ENCODE measurements at regions of chr10 and their contacts with region 1.

Region 1: GRCh38 chr10:819326-819725 is 112.2 kb downstream of the LARP4B start:
- DNase-seq: no peak
- H3K4me3 ChIP-seq: no peak overlapping the region
- H3K27ac ChIP-seq: no peak overlapping the region
- H3K4me1 ChIP-seq: peaks cover 3% of the 10 kb centered on the region
- H3K27me3 ChIP-seq: no peaks in the 10 kb centered on the region
- CTCF ChIP-seq: no peak

Region 2: GRCh38 chr10:851901-852300 is 32.6 kb after region 1 on chr10:
- CTCF ChIA-PET with region 1: no interaction called
- dilution Hi-C with region 1: loop called (anchors 5 kb)
- in situ Hi-C with region 1: no loop called
- intact Hi-C with region 1: no loop called
- DNase-seq: no peak
- H3K4me3 ChIP-seq: no peak overlapping the region
- H3K27ac ChIP-seq: no peak overlapping the region
- H3K4me1 ChIP-seq: no peaks in the 10 kb centered on the region
- H3K27me3 ChIP-seq: no peaks in the 10 kb centered on the region
- CTCF ChIP-seq: no peak

Region 3: GRCh38 chr10:955820-956217 is 136.5 kb after region 1 on chr10:
- CTCF ChIA-PET with region 1: no interaction called
- dilution Hi-C with region 1: no loop called
- in situ Hi-C with region 1: no loop called
- intact Hi-C with region 1: no loop called
- DNase-seq: no peak
- H3K4me3 ChIP-seq: no peak overlapping the region
- H3K27ac ChIP-seq: no peak overlapping the region
- H3K4me1 ChIP-seq: no peaks in the 10 kb centered on the region
- H3K27me3 ChIP-seq: peaks cover 2% of the 10 kb centered on the region
- CTCF ChIP-seq: no peak

Region 4: GRCh38 chr10:1358943-1359598 is 539.7 kb after region 1 on chr10:
- CTCF ChIA-PET with region 1: no interaction called
- dilution Hi-C with region 1: no loop called
- in situ Hi-C with region 1: no loop called
- intact Hi-C with region 1: no loop called
- DNase-seq: no peak
- H3K4me3 ChIP-seq: no peak overlapping the region
- H3K27ac ChIP-seq: no peak overlapping the region
- H3K4me1 ChIP-seq: no peaks in the 10 kb centered on the region
- H3K27me3 ChIP-seq: no peaks in the 10 kb centered on the region
- CTCF ChIP-seq: no peak

Region 5: GRCh38 chr10:2401459-2401858 is 1582.1 kb after region 1 on chr10:
- CTCF ChIA-PET with region 1: no interaction called
- dilution Hi-C with region 1: no loop called
- in situ Hi-C with region 1: no loop called
- intact Hi-C with region 1: no loop called
- DNase-seq: no peak
- H3K4me3 ChIP-seq: no peak overlapping the region
- H3K27ac ChIP-seq: no peak overlapping the region
- H3K4me1 ChIP-seq: no peaks in the 10 kb centered on the region
- H3K27me3 ChIP-seq: no peaks in the 10 kb centered on the region
- CTCF ChIP-seq: no peak